Aorta (tissue), 5 donors: ENCODE measurements at regions of chr2 and their contacts with region 1.

Region 1: DNA sequence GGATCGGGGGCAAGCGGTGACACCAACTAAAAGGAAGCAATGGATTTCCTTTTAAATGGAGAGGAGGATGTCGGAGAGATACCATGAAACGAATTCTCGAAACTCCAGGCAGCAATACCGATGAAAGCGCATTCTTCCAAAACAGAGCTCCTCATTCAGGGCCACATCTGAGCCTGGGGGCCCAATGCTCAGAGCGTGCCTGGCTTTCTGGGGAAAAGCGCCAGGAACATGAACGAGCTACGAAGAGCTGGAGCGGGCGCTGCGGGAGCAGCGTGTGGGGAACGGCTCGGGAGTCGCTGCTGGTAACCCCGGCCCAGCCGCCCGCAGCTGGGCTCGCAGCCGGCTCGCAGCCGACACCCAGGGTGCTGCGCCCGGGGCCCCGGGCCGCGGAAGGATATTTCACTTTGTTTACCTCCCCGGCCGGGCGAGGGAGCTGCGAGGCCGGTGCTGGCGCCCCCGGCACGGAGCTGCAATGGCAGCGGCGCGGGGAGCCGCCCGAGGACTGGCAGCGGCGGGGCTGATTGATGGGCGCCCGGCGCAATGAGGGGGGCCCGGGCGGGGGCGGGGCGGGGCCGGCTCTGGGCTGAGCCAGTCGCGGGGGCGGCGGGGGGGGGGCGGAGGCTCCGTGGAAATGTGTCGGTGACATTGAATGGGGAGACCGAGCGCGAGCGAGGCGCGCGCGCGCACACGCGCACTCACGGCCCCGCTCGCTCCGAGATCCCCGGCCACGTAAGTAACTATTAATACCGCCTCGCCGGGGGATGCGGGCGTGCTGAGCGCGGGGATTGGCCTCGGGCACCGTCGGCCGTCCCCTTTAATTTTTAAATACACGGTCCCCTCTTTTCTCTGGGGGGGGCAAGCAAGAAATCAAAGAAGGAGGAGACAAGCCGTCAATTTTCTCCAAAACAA is at the start of gene TRIB2:
- DNase-seq: peak; percentile 91 to 94
- ATAC-seq: peak; percentile 80
- H3K4me3 ChIP-seq: peak within 1 kb of the TSS; percentile 92 to 95
- H3K27ac ChIP-seq: peak within 1 kb of the TSS; percentile 90 to 92
- H3K4me1 ChIP-seq: no peaks in the 10 kb centered on the region
- H3K27me3 ChIP-seq: no peaks in the 10 kb centered on the region
- total RNA-seq, gene TRIB2: 39.7 to 63.4 TPM

Region 2: DNA sequence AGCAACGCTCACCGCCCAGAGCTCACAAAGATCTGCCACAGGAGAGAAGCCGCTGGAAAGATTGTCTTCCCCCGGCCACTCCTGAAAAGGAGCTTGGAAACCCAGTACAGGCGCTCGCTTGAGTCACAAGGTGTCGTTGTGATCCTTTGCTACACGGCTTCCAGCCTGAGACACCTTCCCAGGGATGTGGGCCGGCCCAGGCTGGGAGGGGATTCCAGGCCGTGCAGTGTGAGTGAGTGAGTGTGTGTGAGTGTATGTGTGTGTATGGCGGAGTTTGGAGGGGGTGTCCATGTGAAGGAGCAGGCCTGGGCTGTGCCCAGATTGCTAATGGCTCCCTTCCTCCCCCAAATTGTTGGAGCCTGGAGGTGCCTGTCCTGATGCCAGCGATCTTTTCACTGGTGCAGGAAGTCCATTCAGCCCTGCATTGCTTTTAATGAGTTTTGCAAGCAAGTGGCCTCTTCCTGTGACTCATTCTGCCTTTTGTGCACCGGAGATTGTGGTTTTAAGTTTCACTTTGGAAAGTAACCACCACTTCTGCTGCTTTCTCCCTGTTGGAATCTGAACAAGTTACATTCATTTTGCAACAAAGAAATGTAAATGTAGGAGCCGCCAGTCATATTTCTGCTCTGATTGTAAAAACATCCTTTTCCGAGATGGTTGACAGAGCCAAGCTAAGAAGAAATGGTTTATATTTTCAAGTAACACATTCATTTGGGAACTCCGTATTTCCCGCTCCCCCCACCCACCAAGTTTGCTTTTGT is 886.4 kb before region 1 on chr2:
- intact Hi-C with region 1: loop called in 1 of 2 experiments (anchors 2 kb)
- DNase-seq: peak; percentile 79 to 82
- ATAC-seq: peak; percentile 85
- H3K4me3 ChIP-seq: peak overlapping the region; percentile 25 to 65
- H3K27ac ChIP-seq: peak overlapping the region in 1 of 2 donors; percentile 91
- H3K4me1 ChIP-seq: no peaks in the 10 kb centered on the region
- H3K27me3 ChIP-seq: no peaks in the 10 kb centered on the region

Region 3: GRCh38 chr2:12320991-12321641 is 395.4 kb before region 1 on chr2:
- intact Hi-C with region 1: loop called (anchors 2 to 5 kb)
- DNase-seq: peak; percentile 82 to 83
- ATAC-seq: peak; percentile 81
- H3K4me3 ChIP-seq: no peak overlapping the region
- H3K27ac ChIP-seq: peak overlapping the region in 1 of 2 donors; percentile 97
- H3K4me1 ChIP-seq: peaks cover 0 to 9% of the 10 kb centered on the region in 2 donors
- H3K27me3 ChIP-seq: no peaks in the 10 kb centered on the region

Region 4: DNA sequence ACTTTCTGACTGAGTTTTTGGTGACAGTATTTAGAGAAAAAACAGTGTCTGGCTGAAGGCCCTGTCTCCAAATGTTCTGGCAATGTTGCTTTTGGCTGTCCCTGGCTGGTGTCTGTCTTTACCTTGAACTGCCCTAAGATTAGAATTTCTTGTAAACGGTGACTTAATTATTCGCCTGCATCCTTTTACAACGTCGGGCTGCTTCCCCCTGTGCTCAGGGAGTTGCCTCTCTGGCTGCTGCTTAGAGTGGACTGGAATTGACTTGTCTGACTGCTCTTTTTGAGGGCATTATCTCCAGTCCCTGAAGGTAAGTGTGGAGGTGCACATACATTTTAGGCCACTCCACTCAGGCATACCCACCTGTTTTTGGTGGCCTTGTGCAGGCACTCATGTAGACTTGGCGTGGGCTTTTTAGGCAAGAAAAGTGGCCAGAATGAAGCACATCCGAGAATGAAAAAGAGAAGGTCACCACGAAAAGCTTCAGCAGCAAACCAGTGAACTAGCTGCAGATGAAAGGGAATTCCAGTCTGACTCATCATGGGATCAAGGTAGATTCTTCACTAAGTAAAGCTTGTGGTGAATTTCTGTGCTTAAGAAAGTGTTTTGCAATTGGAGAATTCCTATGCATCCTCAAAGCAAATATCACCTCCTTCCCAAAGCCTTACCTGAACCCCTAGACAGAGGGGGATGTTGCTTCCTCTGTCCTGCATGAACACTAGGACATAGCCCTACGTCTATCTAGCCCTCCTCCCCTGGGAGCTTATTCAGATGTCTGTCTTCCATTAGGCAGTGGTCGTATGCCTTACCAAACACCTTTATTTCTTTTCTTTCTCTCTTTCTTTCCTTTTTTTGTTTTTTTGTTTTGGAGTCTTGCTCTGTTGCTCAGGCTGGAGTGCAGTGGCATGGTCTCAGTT is 230.1 kb before region 1 on chr2:
- intact Hi-C with region 1: loop called in 1 of 2 experiments (anchors 10 kb)
- DNase-seq: no peak
- ATAC-seq: peak; percentile 66
- H3K4me3 ChIP-seq: no peak overlapping the region
- H3K27ac ChIP-seq: peak overlapping the region in 1 of 2 donors; percentile 70
- H3K4me1 ChIP-seq: peaks cover 0 to 6% of the 10 kb centered on the region in 2 donors
- H3K27me3 ChIP-seq: no peaks in the 10 kb centered on the region

Region 5: DNA sequence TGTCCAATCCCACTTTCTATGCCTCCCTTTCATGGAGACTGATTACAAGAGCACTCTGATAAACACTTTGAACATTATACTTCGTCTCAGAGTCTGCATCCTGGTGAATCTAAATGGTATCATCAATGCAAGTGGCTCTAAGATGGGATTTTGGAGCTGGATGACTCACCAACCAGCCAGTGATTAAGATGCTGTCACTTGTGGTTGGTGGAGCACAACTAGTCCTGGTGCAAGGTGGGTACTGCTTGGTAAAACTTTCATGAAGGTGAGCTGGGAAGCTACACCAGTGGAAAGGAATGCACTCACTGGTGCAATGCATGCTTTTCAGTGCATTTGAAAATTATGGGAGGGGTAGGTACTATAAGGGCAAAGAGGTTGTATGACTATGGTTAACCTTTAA is 137.5 kb before region 1 on chr2:
- intact Hi-C with region 1: no loop called
- DNase-seq: no peak
- ATAC-seq: no peak
- H3K4me3 ChIP-seq: no peak overlapping the region
- H3K27ac ChIP-seq: no peak overlapping the region
- H3K4me1 ChIP-seq: no peaks in the 10 kb centered on the region
- H3K27me3 ChIP-seq: no peaks in the 10 kb centered on the region

Region 6: DNA sequence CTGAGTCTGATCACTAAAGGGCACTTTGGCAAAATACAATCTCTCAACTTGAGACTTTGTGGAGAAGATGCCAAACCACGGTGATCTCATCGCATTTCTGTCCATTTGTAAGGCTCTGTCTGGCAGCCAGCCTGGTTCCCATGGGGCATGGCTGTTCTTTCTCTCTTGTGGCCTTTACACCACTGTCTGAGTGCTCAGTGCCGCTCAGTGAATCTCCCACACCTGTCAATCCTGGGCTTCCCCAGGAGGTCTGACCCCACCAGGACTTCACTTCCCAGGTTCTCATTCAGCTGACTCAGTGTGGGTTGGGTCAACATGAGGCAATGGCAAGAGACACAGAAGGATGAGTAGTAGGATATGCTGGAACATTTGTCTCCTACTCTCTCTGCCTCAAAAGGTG is 96.6 kb before region 1 on chr2:
- intact Hi-C with region 1: loop called in 1 of 2 experiments (anchors 10 kb)
- DNase-seq: peak; percentile 61 to 81
- ATAC-seq: peak; percentile 44
- H3K4me3 ChIP-seq: no peak overlapping the region
- H3K27ac ChIP-seq: no peak overlapping the region
- H3K4me1 ChIP-seq: no peaks in the 10 kb centered on the region
- H3K27me3 ChIP-seq: no peaks in the 10 kb centered on the region

Region 7: GRCh38 chr2:12733846-12734245 is 17.3 kb after region 1 on chr2:
- intact Hi-C with region 1: no loop called
- DNase-seq: no peak
- ATAC-seq: no peak
- H3K4me3 ChIP-seq: no peak overlapping the region
- H3K27ac ChIP-seq: no peak overlapping the region
- H3K4me1 ChIP-seq: no peaks in the 10 kb centered on the region
- H3K27me3 ChIP-seq: no peaks in the 10 kb centered on the region

Region 8: DNA sequence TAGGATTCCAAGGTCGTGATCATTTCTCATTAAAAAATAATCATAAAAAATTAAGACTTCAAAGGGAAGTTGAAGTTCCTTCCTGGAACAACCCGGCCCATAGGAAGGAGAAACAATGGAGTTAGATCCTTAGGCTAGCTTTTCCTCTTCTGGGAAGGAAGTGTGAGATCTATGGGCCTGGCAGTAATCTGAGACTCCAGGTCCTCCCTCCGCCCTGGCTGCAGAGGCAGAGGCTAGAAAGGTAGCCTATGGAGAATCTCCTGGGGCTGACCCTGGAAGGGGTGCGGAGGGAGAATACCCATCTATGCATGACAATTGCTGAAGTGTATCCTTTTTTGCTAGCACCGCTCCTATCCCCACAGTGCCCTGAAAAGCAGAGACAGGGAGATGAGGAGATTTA is 38.1 kb after region 1 on chr2:
- intact Hi-C with region 1: no loop called
- DNase-seq: no peak
- ATAC-seq: no peak
- H3K4me3 ChIP-seq: no peak overlapping the region
- H3K27ac ChIP-seq: no peak overlapping the region
- H3K4me1 ChIP-seq: no peaks in the 10 kb centered on the region
- H3K27me3 ChIP-seq: no peaks in the 10 kb centered on the region

Region 9: GRCh38 chr2:12787891-12788801 is 71.6 kb after region 1 on chr2:
- intact Hi-C with region 1: no loop called
- DNase-seq: no peak
- ATAC-seq: peak; percentile 74
- H3K4me3 ChIP-seq: no peak overlapping the region
- H3K27ac ChIP-seq: peak overlapping the region in 1 of 2 donors; percentile 48
- H3K4me1 ChIP-seq: no peaks in the 10 kb centered on the region
- H3K27me3 ChIP-seq: no peaks in the 10 kb centered on the region

Region 10: GRCh38 chr2:12931186-12931844 is 214.8 kb after region 1 on chr2:
- intact Hi-C with region 1: loop called (anchors 2 to 5 kb)
- DNase-seq: no peak
- ATAC-seq: peak; percentile 83
- H3K4me3 ChIP-seq: no peak overlapping the region
- H3K27ac ChIP-seq: no peak overlapping the region
- H3K4me1 ChIP-seq: no peaks in the 10 kb centered on the region
- H3K27me3 ChIP-seq: no peaks in the 10 kb centered on the region